Panc1 (cell line): ENCODE measurements at regions of chr14 and their contacts with region 1.

Region 1: GRCh38 chr14:50342221-50343078 is 30.3 kb downstream of the DMAC2L start:
- DNase-seq: no peak
- ATAC-seq: peak; percentile 73; the same call in 1 of the 2 replicates
- H3K4me3 ChIP-seq: no peak overlapping the region
- H3K27ac ChIP-seq: no peak overlapping the region
- H3K4me1 ChIP-seq: peaks cover 7% of the 10 kb centered on the region
- H3K27me3 ChIP-seq: no peaks in the 10 kb centered on the region
- CTCF ChIP-seq: peak; percentile 37

Region 2: DNA sequence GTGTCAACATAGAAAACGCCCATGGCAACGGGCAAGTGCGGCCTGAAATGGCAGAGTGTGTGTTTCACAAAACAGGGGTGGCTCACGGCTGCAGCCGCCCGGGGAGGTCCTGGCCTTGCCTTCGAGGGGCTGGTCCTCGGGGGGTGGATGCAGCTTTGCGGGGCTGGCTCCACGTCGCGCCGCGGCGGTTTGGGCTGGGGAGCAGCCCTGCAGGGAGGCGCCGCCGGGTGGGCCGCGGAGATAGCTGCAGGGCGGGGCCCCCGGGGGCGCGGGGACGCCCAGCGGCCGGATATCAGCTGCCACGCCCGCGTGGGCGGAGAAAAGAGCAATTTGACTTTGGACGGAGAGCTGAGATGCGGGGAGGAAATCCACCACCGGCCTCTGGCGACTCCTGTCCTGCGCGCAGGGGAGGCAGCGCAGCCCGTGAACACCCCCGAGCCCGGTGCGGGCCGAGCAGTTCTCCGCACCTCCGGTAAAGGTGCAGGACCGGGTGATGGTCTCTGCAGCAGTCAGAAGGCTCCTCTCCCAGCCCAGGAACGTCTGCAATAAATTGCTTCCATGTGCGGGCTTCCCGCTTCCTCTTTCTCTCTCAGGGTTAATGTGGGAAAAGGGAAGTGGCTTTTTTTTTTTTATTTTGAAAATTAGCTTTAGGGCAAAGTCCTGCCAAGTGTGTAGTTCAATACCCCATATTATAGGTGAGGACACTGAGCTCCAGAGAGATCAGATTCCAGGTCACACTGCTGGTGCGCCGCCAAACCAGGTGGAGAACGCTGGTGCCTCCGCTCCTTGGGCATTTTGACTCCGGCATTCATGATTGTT is 339.0 kb before region 1 on chr14:
- CTCF ChIA-PET with region 1: no interaction called
- POLR2A ChIA-PET with region 1: no interaction called
- in situ Hi-C with region 1: no loop called
- intact Hi-C with region 1: no loop called
- DNase-seq: no peak
- ATAC-seq: peak; percentile 52
- H3K4me3 ChIP-seq: peak overlapping the region; percentile 44 to 54
- H3K27ac ChIP-seq: peak overlapping the region; percentile 100
- H3K4me1 ChIP-seq: peaks cover 69% of the 10 kb centered on the region
- H3K27me3 ChIP-seq: no peaks in the 10 kb centered on the region
- CTCF ChIP-seq: no peak

Region 3: DNA sequence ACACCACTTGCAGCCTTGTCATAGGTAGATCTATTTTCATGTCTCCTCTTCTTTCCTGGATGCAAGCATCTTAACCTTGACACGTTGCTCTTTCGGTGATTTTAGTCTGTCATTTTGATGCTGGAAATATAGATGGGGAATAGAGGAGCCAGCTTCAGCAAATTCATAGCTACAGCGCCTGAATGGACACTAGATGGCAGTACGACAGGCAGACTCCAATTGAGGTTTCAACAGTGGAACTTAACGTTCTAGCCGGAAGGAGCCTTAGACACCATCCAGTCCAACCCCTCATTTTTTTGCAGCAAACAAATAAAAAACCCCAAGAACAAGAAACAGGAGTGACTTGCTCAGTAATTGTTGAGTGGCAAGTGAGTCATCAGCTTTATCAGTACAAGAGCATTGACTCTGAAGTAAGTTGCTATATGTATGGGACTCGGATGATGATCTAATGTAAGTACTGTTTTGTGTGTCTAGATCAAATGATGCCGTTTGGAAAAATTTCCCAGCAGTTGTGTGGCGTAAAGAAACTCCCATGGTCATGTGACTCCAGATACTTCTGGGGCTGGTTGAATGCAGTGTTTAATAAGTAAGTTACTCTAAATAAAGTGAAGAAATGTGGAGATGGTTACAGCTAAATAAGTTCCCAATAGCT is 21.3 kb before region 1 on chr14:
- CTCF ChIA-PET with region 1: interaction called, 13 read pairs
- POLR2A ChIA-PET with region 1: no interaction called
- in situ Hi-C with region 1: no loop called
- intact Hi-C with region 1: no loop called
- DNase-seq: peak; percentile 87
- ATAC-seq: peak; percentile 99
- H3K4me3 ChIP-seq: peak overlapping the region; percentile 16 to 38; a peak in 3 of 4 replicates
- H3K27ac ChIP-seq: peak overlapping the region; percentile 59
- H3K4me1 ChIP-seq: peaks cover 8% of the 10 kb centered on the region
- H3K27me3 ChIP-seq: no peaks in the 10 kb centered on the region
- CTCF ChIP-seq: peak; percentile 87

Region 4: GRCh38 chr14:50363714-50364111 is 21.3 kb after region 1 on chr14:
- CTCF ChIA-PET with region 1: no interaction called
- POLR2A ChIA-PET with region 1: no interaction called
- in situ Hi-C with region 1: no loop called
- intact Hi-C with region 1: no loop called
- DNase-seq: no peak
- ATAC-seq: peak; percentile 71
- H3K4me3 ChIP-seq: no peak overlapping the region
- H3K27ac ChIP-seq: no peak overlapping the region
- H3K4me1 ChIP-seq: no peaks in the 10 kb centered on the region
- H3K27me3 ChIP-seq: no peaks in the 10 kb centered on the region
- CTCF ChIP-seq: no peak